Left colon (tissue), 2 donors: ENCODE measurements at regions of chr15 and their contacts with region 1.

Region 1: GRCh38 chr15:38129531-38130204 is 123.0 kb upstream of the SPRED1 start:
- DNase-seq: peak; percentile 39 to 72
- ATAC-seq: no peak

Region 2: GRCh38 chr15:38059665-38060064 is 70.0 kb before region 1 on chr15:
- intact Hi-C with region 1: loop called in 1 of 2 experiments (anchors 5 kb)
- DNase-seq: no peak
- ATAC-seq: no peak